Left cardiac atrium (tissue), 4 donors: ENCODE measurements at regions of chr6 and their contacts with region 1.

Region 1: GRCh38 chr6:5398530-5398929 is 137.2 kb downstream of the FARS2 start:
- DNase-seq: no peak
- ATAC-seq: peak in 1 of 2 donors; percentile 19

Region 2: DNA sequence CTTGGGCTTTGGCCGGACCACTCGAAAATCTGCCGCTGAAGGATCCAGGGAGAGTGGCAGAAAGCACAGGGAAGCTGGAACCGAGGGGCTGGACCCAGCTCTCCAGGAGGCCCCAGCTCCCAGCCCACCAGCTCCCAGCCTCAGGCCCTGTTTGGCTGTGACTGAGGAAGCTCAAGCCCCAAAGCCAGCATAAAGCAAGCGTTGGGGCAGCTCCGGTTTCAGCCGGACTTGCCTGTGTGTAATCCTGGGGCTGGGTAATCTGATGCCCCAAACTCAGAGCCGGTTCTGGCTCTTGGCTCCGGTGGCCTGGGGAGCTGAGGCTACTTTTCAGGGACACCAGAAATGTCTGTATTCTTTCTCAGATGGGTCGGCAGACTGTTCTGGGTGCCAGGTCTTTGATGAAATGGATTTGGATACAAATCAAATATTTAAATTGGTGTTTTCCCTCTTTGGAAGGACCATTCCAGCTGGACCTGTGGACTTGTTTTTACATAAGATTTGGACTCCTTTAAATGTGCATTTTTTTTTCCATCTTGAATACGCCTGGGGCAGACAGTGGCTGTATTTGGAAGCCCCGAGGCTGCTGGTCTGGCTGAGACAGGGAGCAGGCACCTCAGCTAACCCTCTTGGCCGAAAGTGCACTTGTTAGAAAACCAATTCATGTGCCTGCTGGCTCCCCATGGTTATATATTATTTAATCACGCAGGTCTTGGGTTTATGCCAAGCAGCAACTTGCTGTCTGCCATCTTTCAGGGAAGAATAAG is 424.4 kb before region 1 on chr6:
- intact Hi-C with region 1: no loop called
- DNase-seq: peak; percentile 25
- ATAC-seq: peak; percentile 69 to 83

Region 3: DNA sequence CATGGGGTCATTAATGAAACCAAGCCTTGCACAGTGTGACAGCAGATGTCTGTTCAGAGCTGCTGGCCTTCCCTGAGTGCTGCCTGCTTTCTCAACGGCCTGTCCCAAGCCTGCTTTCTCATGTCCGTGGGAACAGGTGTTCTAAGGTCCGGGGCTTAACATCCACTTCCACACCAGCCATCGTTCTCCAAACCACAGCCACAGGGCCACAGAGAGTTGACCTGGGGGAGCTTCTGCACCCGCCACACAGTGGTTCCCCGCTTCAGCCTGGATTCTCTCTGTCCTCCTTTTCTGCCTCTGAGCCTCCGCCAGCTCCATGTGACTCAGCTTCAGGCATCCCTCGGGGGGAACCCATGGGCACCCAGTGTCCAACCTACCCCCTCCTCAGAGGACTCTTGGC is 340.3 kb before region 1 on chr6:
- intact Hi-C with region 1: loop called in 1 of 2 experiments (anchors 5 kb)
- DNase-seq: no peak
- ATAC-seq: peak in 1 of 2 donors; percentile 14

Region 4: DNA sequence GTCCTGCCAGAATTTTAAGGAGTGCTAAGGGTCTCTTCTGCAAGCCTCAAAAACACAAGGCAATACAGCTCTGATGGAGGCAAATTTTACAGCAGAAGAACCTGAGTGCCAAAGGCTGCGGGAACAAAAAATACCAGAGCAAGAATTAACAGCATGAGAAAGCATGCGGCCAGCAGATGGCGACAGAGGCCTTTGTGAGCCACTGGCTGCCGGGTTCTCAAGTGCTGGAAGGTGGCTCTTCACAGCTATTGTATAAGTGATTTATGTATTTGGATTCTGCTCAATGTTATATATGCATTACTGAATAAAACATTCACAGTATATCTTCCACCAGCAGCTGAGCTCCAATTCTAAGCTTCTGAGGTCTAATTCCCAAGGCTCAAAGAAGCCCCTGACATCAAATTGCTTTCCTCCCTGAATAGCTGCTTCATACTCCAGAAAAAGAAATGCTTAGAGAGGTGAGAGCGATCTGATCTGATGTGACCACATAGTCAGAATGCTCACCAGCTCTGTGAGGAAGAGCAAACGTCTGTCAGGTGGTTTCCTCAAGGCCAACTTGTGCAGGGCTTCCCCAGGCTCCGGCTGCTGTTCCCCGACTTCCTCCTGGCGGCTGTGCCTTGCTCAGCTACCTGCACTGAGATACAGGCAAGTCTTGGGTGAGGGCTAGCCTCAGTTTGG is 254.8 kb before region 1 on chr6:
- intact Hi-C with region 1: loop called (anchors 5 to 10 kb)
- DNase-seq: peak; percentile 89
- ATAC-seq: peak; percentile 80 to 85